ENCODE measurements at regions of chr20 and their contacts with region 1.

Region 1: DNA sequence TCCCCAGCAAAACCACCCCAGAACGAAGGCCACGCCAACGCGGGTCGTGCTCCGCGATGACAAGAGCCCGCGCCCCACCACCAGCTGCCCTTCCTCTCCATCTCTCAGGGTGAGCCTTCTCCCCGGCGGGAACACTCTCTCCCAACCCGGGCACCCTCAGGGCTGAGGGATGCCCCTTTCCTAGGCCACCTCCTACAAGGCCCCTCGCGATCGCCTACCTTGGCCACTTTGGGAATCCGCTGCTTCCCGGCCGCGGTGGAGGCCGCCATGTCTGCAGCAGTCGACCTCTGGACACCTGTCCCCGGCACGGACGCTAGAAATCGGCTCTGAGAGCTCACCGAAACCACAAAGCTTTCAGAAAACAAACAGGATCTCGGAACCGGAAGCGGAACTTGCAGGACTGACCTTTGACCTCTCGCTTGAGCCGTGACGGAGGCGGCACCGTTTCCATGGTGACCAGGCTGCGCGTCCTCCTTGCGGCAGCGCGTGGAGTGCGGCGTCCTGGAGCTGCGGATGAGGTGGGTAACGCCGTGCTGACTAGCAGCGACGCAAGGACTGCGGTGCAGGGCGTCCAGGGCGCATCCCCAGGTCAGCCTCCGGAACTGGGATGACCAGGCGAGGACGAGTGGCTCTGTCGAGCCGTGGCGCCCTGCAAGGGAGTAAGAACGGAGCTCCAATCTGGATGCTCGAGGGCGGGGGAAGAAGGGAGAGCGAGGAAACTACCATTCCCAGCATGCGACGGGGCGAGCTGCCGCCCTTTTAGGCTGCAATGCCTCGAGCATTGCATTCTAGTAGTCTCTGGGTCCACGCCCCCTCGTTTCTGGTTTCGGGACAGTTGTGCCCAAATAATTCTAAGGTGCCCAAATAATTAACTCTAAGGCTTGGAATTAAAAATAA is at the starts of genes CFAP61 and CRNKL1:
- DNase-seq: peak; percentile 95
- H3K4me3 Mint-ChIP-seq: peak within 1 kb of the TSS; percentile 97
- H3K27ac Mint-ChIP-seq: peak within 1 kb of the TSS; percentile 96
- H3K4me1 Mint-ChIP-seq: peaks cover 13% of the 10 kb centered on the region
- H3K27me3 Mint-ChIP-seq: peaks cover 6% of the 10 kb centered on the region
- total RNA-seq, gene CFAP61: not detected in 2 replicates
- total RNA-seq, gene CRNKL1: 23.9 and 24.1 TPM in 2 replicates

Region 2: DNA sequence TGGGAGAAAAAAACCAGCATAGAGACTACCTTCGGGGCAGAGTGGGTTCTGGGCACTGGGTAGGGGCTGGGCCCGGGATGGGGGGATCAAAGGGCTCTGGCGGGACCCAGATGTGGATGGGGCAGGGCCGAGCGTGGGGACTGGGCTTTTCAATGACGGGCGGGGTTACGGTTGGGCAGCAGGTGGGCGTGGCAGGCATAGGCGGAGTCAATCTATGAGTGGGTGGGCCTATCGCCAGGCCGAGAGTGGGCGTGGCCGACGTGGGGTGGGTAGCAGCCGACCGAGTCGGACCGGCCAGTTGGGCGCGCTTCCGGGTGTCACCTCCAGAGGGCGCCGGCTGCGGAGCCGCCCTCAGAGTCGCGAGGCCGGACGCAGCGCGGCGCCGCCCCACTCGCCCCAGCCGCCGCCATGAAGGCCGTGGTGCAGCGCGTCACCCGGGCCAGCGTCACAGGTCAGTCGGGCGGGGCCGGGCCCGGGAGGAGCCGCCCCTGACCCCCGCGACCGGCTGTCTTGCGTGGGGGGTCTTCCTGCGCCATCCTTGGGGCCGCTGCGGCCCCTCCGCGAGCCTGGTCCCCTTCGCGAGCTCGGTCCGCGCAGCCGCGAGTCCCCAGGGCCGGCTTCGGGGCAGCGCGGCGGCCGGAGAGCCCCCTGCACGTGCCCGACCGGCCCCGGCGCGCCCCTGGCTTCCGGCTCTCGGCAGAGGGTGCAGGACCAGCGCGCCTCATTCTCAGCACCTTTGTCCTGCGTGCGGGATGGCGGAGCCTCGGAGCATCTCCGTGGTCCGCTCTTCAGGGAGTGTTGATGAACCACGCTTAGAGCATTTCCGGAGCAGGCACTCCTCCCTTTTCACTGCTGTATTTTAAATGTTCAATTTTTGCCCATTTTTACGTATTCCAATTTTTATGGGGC is 1464.4 kb before region 1 on chr20 and contains the start of gene DTD1:
- intact Hi-C with region 1: loop called (anchors 5 kb)
- DNase-seq: peak; percentile 80
- H3K4me3 Mint-ChIP-seq: peak within 1 kb of the TSS; percentile 93
- H3K27ac Mint-ChIP-seq: peak within 1 kb of the TSS; percentile 82
- H3K4me1 Mint-ChIP-seq: peaks cover 25% of the 10 kb centered on the region
- H3K27me3 Mint-ChIP-seq: peaks cover 10% of the 10 kb centered on the region
- total RNA-seq, gene DTD1: 37.7 and 44.0 TPM in 2 replicates

Region 3: GRCh38 chr20:19775360-19776253 is 276.7 kb before region 1 on chr20:
- intact Hi-C with region 1: no loop called
- DNase-seq: no peak
- H3K4me3 Mint-ChIP-seq: no peak overlapping the region
- H3K27ac Mint-ChIP-seq: no peak overlapping the region
- H3K4me1 Mint-ChIP-seq: no peaks in the 10 kb centered on the region
- H3K27me3 Mint-ChIP-seq: peaks cover 2% of the 10 kb centered on the region

Region 4: DNA sequence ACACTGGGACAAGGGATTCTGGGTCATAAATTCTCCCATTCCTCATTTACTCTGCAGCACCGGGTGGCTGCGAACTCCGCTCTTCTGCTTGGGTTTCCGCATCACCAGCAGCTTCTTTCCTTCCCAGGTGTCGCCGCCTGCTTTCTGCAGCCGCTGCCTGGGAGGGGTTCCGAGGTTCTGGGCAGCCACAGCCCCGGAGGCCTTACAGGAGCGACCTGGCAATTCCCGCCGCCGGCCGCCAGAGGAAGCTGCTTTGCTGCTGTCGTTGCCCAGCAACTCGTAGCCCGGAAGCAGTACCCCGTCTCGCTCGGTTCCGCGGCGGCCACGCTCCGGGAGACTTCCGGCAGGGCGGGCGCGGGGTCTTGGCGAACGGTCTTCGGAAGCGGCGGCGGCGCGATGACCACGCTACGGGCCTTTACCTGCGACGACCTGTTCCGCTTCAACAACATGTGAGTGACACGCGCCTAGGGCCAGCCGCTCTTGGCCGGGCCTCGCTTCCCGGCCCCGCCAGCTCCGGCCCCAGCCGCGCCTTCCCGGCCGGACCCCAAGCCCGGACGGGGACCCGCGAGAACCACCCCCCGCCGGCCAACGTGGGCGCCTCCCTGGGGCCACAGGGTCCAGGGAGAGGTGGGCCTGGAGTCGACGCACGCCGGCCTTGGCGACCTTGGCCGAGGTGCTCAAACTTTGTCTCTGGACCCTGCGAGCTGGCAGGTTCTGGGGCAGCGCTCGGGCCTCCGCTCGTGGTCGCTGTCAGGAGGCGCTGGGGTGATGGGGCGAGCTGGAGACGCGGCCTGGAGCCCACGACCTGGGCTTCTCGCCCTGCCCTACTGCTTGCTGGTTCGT is 35.1 kb before region 1 on chr20 and contains the start of gene NAA20:
- intact Hi-C with region 1: loop called (anchors 1 kb)
- DNase-seq: peak; percentile 88
- H3K4me3 Mint-ChIP-seq: peak within 1 kb of the TSS; percentile 90
- H3K27ac Mint-ChIP-seq: peak within 1 kb of the TSS; percentile 86
- H3K4me1 Mint-ChIP-seq: peaks cover 44% of the 10 kb centered on the region
- H3K27me3 Mint-ChIP-seq: no peaks in the 10 kb centered on the region
- total RNA-seq, gene NAA20: 86.3 and 89.9 TPM in 2 replicates

Region 5: GRCh38 chr20:21125849-21126580 is 1073.7 kb after region 1 on chr20 and contains the start of gene KIZ:
- intact Hi-C with region 1: loop called (anchors 2 kb)
- DNase-seq: peak; percentile 96
- H3K4me3 Mint-ChIP-seq: peak within 1 kb of the TSS; percentile 82
- H3K27ac Mint-ChIP-seq: peak within 1 kb of the TSS; percentile 79
- H3K4me1 Mint-ChIP-seq: peaks cover 15% of the 10 kb centered on the region
- H3K27me3 Mint-ChIP-seq: peaks cover 3% of the 10 kb centered on the region
- total RNA-seq, gene KIZ: 9.3 and 11.8 TPM in 2 replicates

Measured in activated T-helper 1 cell treated with anti-CD3 and anti-CD28 coated beads, Interleukin-12 subunit alpha, Interleukin-12 subunit beta, Interleukin-2, Interleukin-4 antibody, amounts not matched to agents 30 ng/mL and 10 ng/mL and 1 ng/mL, durations not matched to agents 14 hours and 24 hours and 36 hours (primary cell).